Psoas muscle (tissue), 8 donors: ENCODE measurements at regions of chr9 and their contacts with region 1.

Region 1: DNA sequence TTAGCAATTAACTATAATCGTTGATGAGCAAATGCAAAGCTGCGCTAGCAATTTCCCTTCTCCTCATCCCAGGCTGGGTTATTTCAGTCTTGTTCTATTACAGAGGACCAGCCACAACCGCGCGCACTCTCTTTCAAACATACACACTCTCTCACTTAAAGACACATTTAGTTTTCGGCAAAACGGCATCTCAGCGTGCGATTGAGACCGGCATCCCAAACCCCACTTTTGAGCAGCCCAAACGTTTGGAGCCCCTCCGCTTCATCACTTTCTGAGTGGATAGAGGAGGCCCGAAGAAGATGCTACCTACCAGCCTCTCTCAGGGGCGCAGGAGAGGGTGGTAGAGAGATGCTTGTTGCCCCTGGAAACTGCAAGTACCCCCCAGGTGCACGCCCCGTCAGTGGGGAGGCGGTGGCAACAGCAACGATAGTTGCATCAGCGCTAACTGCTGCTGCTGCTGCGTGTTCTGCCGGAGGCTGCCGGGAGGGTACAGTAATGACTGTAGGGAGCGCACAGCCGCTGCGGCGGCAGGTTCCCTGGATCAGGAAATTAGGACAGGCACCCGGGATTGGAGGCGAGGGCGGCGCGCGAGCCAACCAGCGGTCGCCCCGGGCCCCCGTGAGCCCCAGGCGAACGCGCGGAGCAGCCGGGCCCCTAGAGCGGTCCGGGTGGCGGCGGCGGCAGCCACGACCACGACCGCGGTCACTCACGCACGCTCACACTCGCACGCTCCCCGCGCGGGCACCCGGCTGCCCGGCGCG is 488 bp upstream of the VLDLR start:
- DNase-seq: peak; percentile 83 to 90
- ATAC-seq: peak; percentile 77 to 86 (median 80)
- H3K4me3 ChIP-seq: peak overlapping the region; percentile 90
- H3K27ac ChIP-seq: peak overlapping the region; percentile 97
- H3K4me1 ChIP-seq: peaks cover 17% of the 10 kb centered on the region
- H3K27me3 ChIP-seq: no peaks in the 10 kb centered on the region
- CTCF ChIP-seq: peak; percentile 19

Region 2: GRCh38 chr9:2140600-2141223 is 480.4 kb before region 1 on chr9:
- intact Hi-C with region 1: loop called in 1 of 2 experiments (anchors 10 kb)
- DNase-seq: no peak
- ATAC-seq: peak; percentile 64 to 84 (median 82)
- H3K4me3 ChIP-seq: no peak overlapping the region
- H3K27ac ChIP-seq: peak overlapping the region; percentile 54
- H3K4me1 ChIP-seq: peaks cover 31% of the 10 kb centered on the region
- H3K27me3 ChIP-seq: no peaks in the 10 kb centered on the region
- CTCF ChIP-seq: no peak

Region 3: DNA sequence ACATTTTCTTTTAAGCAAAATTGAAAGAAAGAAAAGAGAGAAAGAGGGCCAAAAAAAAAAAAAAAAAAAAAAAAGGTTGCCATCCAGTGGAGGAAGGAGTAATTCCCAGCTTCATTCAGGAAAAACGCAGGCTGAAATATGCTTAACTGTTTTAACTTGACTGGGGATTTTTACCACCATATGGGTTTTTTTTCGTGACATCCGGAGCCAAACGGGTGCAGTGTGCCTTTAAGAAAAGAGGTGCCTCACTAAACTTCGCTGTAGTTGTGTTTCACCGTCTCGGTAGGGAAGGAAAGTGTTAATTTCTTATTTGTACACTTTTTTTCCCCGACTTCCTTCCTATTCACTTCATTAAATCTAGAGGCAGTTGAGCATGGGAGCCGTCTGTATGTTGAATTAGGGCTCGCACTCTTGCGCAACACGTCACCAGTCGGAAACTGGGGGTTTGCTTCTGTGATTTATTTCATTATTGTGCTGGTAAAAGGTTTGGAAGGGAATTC is 462.9 kb before region 1 on chr9:
- intact Hi-C with region 1: loop called in 1 of 2 experiments (anchors 10 kb)
- DNase-seq: peak; percentile 40 to 59
- ATAC-seq: peak; percentile 57 to 69 (median 64)
- H3K4me3 ChIP-seq: peak overlapping the region; percentile 72
- H3K27ac ChIP-seq: peak overlapping the region; percentile 83
- H3K4me1 ChIP-seq: peaks cover 24% of the 10 kb centered on the region
- H3K27me3 ChIP-seq: no peaks in the 10 kb centered on the region
- CTCF ChIP-seq: no peak

Region 4: DNA sequence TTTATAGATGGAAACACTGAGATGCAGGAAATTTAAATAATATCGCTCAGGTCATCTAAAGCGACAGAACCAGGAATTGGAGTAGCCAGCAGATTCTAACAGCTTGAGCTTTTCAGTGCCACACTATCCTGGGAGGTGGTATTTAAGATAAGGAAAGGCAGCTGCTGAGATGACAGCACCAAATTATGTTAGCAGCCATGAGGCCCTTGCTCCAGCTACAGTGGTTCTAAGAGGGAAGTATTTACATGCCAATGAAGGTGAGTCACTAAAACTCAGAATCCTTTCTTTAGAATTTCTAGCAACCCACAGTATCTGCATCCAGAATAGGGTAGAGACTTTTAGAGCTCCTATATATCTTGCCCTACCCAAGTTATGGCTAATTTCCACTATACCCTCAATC is 126.5 kb before region 1 on chr9:
- intact Hi-C with region 1: loop called in 1 of 2 experiments (anchors 10 kb)
- DNase-seq: no peak
- ATAC-seq: peak in 2 of 4 donors; percentile 13 to 41
- H3K4me3 ChIP-seq: no peak overlapping the region
- H3K27ac ChIP-seq: no peak overlapping the region
- H3K4me1 ChIP-seq: peaks cover 28% of the 10 kb centered on the region
- H3K27me3 ChIP-seq: no peaks in the 10 kb centered on the region
- CTCF ChIP-seq: no peak

Region 5: GRCh38 chr9:2526071-2526828 is 94.8 kb before region 1 on chr9:
- intact Hi-C with region 1: no loop called
- DNase-seq: no peak
- ATAC-seq: no peak
- H3K4me3 ChIP-seq: no peak overlapping the region
- H3K27ac ChIP-seq: no peak overlapping the region
- H3K4me1 ChIP-seq: no peaks in the 10 kb centered on the region
- H3K27me3 ChIP-seq: no peaks in the 10 kb centered on the region
- CTCF ChIP-seq: no peak

Region 6: DNA sequence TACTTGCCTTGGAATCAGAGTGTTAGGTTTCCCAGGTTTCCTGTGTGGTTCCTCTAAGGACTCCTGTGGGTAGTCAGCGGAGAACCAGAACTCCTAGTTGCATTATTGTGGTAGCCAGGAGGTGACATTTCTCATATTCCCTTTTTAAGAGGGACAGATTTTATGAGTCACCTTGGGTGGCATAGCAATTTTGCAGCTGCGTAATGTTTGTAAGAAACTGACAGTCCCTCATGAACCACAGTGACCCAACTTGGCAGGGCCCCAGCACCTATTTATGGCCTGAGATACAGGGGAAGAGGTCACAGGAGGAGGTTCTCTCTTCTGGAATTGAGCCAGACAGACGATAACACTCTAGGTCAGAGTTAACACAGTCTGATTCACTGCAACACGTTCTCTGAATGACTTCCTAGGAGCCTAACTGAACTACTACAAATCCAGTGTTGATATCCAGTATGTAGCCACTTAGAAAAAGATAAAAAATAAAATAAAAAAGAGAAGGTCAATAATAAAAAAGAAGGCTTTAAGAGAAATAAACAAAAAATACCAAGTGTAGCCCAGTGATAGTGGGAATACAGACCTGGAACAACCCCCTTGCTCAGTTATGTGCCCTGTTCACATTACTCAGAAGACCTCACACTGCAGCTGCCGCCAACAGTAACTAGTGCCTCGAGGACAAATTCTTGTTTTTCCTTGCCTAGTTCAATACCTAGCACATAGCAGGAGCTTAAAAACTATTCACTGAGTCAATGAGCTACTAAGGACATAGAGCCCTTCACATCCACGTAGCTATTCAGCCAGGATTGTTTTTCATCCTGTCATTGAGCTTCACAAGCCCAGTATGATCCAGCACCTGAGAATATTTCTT is 50.3 kb before region 1 on chr9:
- intact Hi-C with region 1: loop called (anchors 2 to 5 kb)
- DNase-seq: peak; percentile 93 to 98
- ATAC-seq: peak; percentile 89 to 94 (median 90)
- H3K4me3 ChIP-seq: peak overlapping the region; percentile 24
- H3K27ac ChIP-seq: peak overlapping the region; percentile 83
- H3K4me1 ChIP-seq: peaks cover 28% of the 10 kb centered on the region
- H3K27me3 ChIP-seq: no peaks in the 10 kb centered on the region
- CTCF ChIP-seq: no peak

Region 7: GRCh38 chr9:2662496-2662895 is 41.4 kb after region 1 on chr9:
- intact Hi-C with region 1: loop called in 1 of 2 experiments (anchors 5 kb)
- DNase-seq: no peak
- ATAC-seq: peak; percentile 26 to 65 (median 54)
- H3K4me3 ChIP-seq: no peak overlapping the region
- H3K27ac ChIP-seq: peak overlapping the region; percentile 78
- H3K4me1 ChIP-seq: peaks cover 19% of the 10 kb centered on the region
- H3K27me3 ChIP-seq: no peaks in the 10 kb centered on the region
- CTCF ChIP-seq: no peak